ENCODE measurements at regions of chr6 and their contacts with region 1.

Region 1: GRCh38 chr6:63716169-63716568 is 80.6 kb downstream of the PHF3 start:
- DNase-seq: no peak
- ATAC-seq: no peak
- H3K4me3 ChIP-seq: no peak overlapping the region
- H3K4me3 Mint-ChIP-seq: no peak overlapping the region
- H3K27ac ChIP-seq: no peak overlapping the region
- H3K27ac Mint-ChIP-seq: no peak overlapping the region
- H3K4me1 ChIP-seq: no peaks in the 10 kb centered on the region
- H3K4me1 Mint-ChIP-seq: peaks cover 4% of the 10 kb centered on the region
- H3K27me3 ChIP-seq: no peaks in the 10 kb centered on the region
- H3K27me3 Mint-ChIP-seq: no peaks in the 10 kb centered on the region
- CTCF ChIP-seq: no peak

Region 2: DNA sequence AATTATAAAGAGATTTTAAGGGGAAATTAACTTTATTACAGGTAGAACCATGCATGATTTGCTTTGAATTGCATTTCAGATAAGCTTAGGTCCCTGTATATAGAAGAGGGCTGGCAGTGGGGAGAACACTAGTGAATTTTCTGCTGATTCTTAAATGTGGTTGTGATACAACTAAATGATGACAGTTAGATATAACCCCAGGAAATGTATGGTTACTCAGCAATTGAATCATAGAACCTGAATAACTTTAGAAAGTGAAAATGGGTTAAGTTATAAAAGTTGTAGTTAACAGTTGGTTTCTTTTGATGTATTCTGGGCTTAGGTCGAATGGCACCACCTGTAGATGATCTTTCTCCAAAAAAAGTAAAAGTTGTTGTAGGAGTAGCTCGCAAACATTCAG is 10.5 kb before region 1 on chr6:
- CTCF ChIA-PET with region 1: interaction called, 3 read pairs
- POLR2A ChIA-PET with region 1: no interaction called
- intact Hi-C with region 1: loop called in 1 of 2 experiments (anchors 2 kb)
- DNase-seq: no peak
- ATAC-seq: no peak
- H3K4me3 ChIP-seq: no peak overlapping the region
- H3K4me3 Mint-ChIP-seq: no peak overlapping the region
- H3K27ac ChIP-seq: no peak overlapping the region
- H3K27ac Mint-ChIP-seq: peak overlapping the region; percentile 10
- H3K4me1 ChIP-seq: no peaks in the 10 kb centered on the region
- H3K4me1 Mint-ChIP-seq: peaks cover 4% of the 10 kb centered on the region
- H3K27me3 ChIP-seq: no peaks in the 10 kb centered on the region
- H3K27me3 Mint-ChIP-seq: no peaks in the 10 kb centered on the region
- CTCF ChIP-seq: no peak